AG04450 (cell line): ENCODE measurements at regions of chr6 and their contacts with region 1.

Region 1: DNA sequence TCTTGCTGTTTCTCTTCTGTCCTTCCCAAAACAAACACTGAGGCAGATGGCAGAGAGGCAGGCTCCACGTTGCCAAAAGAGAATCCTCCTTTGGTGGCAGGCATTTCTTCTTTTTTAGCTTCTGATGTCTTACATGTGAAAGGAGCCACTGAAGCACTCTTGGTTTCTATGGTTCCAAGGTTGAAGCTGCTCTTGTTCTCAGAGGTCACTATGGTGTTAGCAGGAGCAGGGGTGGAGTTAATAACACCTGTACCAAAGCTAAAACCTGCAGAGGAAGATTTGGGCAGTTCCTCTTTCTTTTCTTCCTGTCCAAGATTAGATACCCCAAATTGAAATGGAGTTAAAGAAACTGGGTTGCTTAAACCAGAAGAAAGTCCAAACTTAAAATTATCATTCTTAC is 28.8 kb downstream of the FAM8A1 start:
- DNase-seq: no peak
- H3K4me3 ChIP-seq: no peak overlapping the region
- H3K27ac ChIP-seq: no peak overlapping the region
- H3K27me3 ChIP-seq: no peaks in the 10 kb centered on the region
- CTCF ChIP-seq: no peak

Region 2: GRCh38 chr6:17281100-17281494 is 347.8 kb before region 1 on chr6 and contains the start of gene RBM24:
- CTCF ChIA-PET with region 1: no interaction called
- POLR2A ChIA-PET with region 1: no interaction called
- DNase-seq: peak; percentile 49
- H3K4me3 ChIP-seq: peak within 1 kb of the TSS; percentile 91
- H3K27ac ChIP-seq: peak within 1 kb of the TSS; percentile 39
- H3K27me3 ChIP-seq: no peaks in the 10 kb centered on the region
- CTCF ChIP-seq: peak; percentile 46
- polyA plus RNA-seq, gene RBM24: 9.1 and 11.3 TPM in 2 replicates

Region 3: DNA sequence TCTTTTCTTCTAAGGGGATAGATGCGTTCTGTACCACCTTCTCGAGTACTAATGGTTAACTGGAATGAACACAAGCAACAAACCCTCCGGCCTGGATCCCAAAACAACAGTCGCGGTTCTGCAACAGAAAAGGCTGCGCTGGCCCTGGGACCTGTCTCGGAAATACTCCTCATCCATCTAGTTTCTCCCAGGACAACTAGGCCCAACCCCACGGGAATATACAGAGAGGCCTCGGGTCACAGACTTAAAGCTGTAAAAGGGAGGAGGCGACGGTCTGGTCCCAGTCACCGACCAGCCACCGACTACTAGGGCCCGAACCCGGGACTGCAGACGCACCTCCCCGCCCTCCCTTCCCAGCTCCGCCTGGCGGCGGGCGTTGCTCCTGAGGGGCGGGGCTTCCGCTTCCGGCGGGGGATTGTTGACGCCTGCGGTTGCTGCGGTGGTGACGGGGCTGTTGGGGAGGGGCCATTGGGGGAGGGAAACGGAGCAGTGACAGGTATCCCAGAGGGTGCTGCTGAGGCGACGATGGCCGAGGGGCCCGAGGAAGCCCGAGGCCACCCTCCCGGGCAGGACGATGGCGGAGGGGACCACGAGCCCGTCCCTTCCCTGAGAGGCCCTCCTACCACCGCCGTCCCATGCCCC is 28.9 kb before region 1 on chr6 and contains the start of gene FAM8A1:
- CTCF ChIA-PET with region 1: interaction called, 4 read pairs
- POLR2A ChIA-PET with region 1: interaction called, 10 read pairs
- DNase-seq: peak; percentile 44
- H3K4me3 ChIP-seq: peak within 1 kb of the TSS; percentile 88
- H3K27ac ChIP-seq: peak within 1 kb of the TSS; percentile 65
- H3K27me3 ChIP-seq: no peaks in the 10 kb centered on the region
- CTCF ChIP-seq: peak; percentile 72
- polyA plus RNA-seq, gene FAM8A1: 17.1 and 24.1 TPM in 2 replicates

Region 4: DNA sequence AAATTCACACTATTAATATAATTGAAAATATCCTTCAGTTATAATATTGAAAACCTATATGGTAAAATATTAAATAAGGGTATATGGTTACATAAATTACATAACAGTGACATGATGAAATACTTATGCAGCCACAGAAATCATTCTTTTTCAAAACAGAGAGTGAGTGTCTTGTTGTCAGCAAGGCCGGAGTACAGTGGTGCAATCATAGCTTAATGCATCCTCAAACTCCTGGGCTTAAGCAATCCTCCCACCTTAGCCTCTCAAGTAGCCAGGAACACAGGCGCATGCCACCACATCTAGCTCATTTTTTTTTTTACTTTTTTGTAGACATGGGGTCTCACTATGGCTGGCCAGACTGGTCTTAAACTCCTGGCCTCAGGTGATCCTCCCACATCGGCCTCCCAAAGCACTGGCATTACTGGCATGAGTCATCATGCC is 11.6 kb after region 1 on chr6:
- CTCF ChIA-PET with region 1: no interaction called
- POLR2A ChIA-PET with region 1: no interaction called
- DNase-seq: no peak
- H3K4me3 ChIP-seq: no peak overlapping the region
- H3K27ac ChIP-seq: no peak overlapping the region
- H3K27me3 ChIP-seq: no peaks in the 10 kb centered on the region
- CTCF ChIP-seq: no peak